Activated CD4-positive, alpha-beta T cell treated with anti-CD3 and anti-CD28 coated beads, Interleukin-2, amount 10 ng/mL, durations not matched to agents 24 days and 14 days (primary cell): ENCODE measurements at regions of chr14 and their contacts with region 1.

Region 1: GRCh38 chr14:52413729-52414408 is 99.8 kb downstream of the PTGER2 start:
- DNase-seq: no peak
- H3K4me3 Mint-ChIP-seq: peak overlapping the region; percentile 66
- H3K27ac Mint-ChIP-seq: peak overlapping the region; percentile 90
- H3K4me1 Mint-ChIP-seq: peaks cover 55% of the 10 kb centered on the region
- H3K27me3 Mint-ChIP-seq: no peaks in the 10 kb centered on the region

Region 2: DNA sequence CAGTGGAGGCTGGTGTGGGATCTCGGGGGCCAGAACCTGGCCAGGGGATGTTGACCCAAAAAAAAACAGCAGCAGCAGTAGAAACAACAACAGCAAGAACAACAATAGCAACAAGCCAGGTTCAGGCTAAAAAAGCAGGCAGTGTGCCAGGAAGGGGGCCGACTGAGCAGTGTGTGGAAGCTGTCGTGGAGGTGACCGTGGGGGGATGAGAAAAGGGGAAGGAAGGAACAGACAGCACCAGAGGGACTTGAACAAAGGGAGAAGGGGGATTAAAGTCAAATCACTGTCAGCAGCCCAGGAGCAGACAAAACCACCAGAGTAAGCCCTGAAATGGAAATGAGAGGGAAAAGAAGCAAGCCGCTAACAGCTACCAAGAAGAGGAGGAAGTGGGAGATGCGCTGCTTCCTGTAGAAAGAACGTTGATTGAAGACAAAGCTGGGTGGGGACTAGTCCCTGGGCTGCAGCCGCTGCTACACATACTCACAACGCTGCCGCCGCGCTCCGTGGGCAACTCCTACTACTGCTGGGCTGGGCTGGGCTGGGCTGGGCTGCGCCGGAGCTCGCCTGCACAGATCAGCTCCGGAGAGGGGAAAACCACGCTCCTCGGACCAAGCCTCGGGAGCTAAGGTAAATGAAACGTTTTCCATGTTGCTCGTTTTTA is 553.6 kb before region 1 on chr14 and contains the start of gene GNG2:
- intact Hi-C with region 1: loop called (anchors 5 kb)
- DNase-seq: peak; percentile 95
- H3K4me3 Mint-ChIP-seq: peak within 1 kb of the TSS; percentile 99
- H3K27ac Mint-ChIP-seq: peak within 1 kb of the TSS; percentile 92
- H3K4me1 Mint-ChIP-seq: peaks cover 51% of the 10 kb centered on the region
- H3K27me3 Mint-ChIP-seq: no peaks in the 10 kb centered on the region
- total RNA-seq, gene GNG2: 104 and 105 TPM in 2 replicates

Region 3: DNA sequence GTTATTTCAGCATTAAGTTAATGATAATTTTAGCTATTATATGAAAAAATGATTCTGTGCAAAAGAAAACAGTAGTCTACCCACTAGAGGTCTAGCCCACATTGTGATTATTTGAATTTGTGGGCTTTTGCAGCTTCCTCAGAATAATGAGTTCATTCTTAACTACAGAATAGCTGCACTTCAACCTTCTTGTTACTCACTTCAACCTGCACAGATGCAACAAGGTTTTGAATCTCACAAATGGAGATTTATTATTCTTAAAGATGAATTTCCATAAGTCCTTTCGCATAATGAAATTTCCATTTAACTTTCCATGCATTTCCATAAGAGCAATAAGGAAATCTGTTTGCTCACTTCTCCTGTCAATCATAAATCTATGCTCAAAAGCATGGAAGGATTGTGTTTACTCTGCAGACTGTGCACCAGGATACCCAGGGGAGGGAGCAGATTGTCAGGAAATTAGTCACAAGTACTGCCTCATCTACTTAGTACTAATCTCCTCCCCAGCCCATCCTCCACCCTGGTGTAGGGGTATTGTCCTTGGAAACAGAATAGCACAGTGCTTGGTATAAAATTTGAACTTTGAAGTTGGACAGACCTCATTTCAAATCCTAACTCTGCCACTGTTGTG is 75.7 kb before region 1 on chr14:
- intact Hi-C with region 1: no loop called
- DNase-seq: peak; percentile 62
- H3K4me3 Mint-ChIP-seq: no peak overlapping the region
- H3K27ac Mint-ChIP-seq: peak overlapping the region; percentile 74
- H3K4me1 Mint-ChIP-seq: peaks cover 39% of the 10 kb centered on the region
- H3K27me3 Mint-ChIP-seq: no peaks in the 10 kb centered on the region

Region 4: GRCh38 chr14:52351233-52352060 is 62.4 kb before region 1 on chr14:
- intact Hi-C with region 1: loop called (anchors 1 kb)
- DNase-seq: peak; percentile 82
- H3K4me3 Mint-ChIP-seq: peak overlapping the region; percentile 81
- H3K27ac Mint-ChIP-seq: peak overlapping the region; percentile 99
- H3K4me1 Mint-ChIP-seq: peaks cover 64% of the 10 kb centered on the region
- H3K27me3 Mint-ChIP-seq: no peaks in the 10 kb centered on the region

Region 5: DNA sequence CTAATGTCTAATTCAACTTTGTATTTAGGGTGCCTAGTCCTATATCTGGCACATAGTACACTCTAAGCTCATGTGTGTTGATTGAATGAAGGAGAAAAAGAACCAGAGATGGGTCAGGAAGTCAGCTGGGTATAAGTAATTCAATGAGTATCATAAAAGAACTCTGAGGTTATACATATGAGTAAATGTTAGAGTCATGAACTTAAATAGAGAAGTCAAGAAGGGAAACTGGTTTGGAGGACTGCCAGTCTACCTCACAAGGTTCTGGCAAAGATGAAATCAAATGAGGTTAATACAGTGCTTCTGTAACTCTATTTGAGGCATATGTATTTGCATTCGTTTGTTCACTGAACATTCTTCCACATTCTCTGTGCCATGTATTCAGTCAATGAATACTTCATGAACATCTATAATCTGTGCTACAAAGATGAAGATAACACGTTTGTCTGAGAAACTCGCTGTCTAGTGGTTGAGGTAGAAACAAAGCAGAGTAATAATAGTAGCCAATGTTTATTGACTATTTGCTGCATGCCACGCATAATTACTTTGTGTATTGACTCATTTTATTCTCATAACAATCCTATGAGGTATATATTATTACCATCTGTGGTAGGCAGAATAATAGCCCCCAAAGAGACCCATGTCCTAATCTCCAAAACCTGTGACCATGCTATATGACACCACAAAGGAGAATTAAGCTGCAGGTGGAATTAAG is 10.9 kb before region 1 on chr14:
- intact Hi-C with region 1: loop called (anchors 1 kb)
- DNase-seq: peak; percentile 70
- H3K4me3 Mint-ChIP-seq: peak overlapping the region; percentile 28
- H3K27ac Mint-ChIP-seq: peak overlapping the region; percentile 75
- H3K4me1 Mint-ChIP-seq: peaks cover 71% of the 10 kb centered on the region
- H3K27me3 Mint-ChIP-seq: peaks cover 1% of the 10 kb centered on the region

Region 6: DNA sequence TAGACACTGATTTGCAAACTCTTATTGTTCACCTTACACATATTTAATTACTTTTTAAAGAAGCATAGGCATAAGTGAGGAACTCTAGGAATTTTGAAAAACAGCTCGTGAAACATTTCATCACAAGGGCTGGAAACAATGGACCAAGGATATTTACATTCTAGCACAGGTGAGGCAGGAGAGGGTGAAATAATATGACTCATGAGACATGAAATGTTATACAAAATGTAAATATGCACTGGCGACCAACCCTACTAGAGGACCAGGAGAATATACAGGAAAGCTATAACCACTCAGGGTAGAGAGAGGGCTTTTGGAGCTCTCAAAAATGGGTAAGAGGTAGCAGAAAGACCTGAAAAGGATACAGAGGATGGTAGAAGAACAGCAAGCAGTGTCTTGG is 15.6 kb after region 1 on chr14:
- intact Hi-C with region 1: no loop called
- DNase-seq: no peak
- H3K4me3 Mint-ChIP-seq: no peak overlapping the region
- H3K27ac Mint-ChIP-seq: no peak overlapping the region
- H3K4me1 Mint-ChIP-seq: peaks cover 12% of the 10 kb centered on the region
- H3K27me3 Mint-ChIP-seq: no peaks in the 10 kb centered on the region

Region 7: DNA sequence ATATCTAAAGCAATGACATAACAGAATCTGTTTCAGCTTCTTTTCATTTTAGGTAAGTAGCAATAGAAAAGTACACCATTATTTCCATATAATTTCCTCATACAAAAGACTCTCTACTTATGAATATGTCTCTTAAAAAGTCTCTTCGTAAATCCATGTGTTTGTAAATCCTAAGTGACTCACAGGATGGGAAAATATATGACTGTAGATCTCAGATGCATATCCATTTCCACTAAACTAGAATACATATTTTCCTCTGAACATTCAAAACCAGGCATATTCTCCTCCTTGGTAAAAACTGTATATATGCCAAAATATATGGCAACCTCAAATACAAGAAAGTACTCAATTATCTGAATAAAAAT is 44.8 kb after region 1 on chr14:
- intact Hi-C with region 1: loop called (anchors 1 kb)
- DNase-seq: no peak
- H3K4me3 Mint-ChIP-seq: no peak overlapping the region
- H3K27ac Mint-ChIP-seq: no peak overlapping the region
- H3K4me1 Mint-ChIP-seq: peaks cover 15% of the 10 kb centered on the region
- H3K27me3 Mint-ChIP-seq: no peaks in the 10 kb centered on the region

Region 8: GRCh38 chr14:52467515-52468266 is 53.8 kb after region 1 on chr14:
- intact Hi-C with region 1: loop called (anchors 1 kb)
- DNase-seq: peak; percentile 75
- H3K4me3 Mint-ChIP-seq: peak overlapping the region; percentile 28
- H3K27ac Mint-ChIP-seq: peak overlapping the region; percentile 56
- H3K4me1 Mint-ChIP-seq: peaks cover 30% of the 10 kb centered on the region
- H3K27me3 Mint-ChIP-seq: no peaks in the 10 kb centered on the region